ENCODE measurements at regions of chr17 and their contacts with region 1.

Region 1: GRCh38 chr17:40113110-40113906 is 8.5 kb upstream of the MSL1 start:
- DNase-seq: peak; percentile 97

Region 2: DNA sequence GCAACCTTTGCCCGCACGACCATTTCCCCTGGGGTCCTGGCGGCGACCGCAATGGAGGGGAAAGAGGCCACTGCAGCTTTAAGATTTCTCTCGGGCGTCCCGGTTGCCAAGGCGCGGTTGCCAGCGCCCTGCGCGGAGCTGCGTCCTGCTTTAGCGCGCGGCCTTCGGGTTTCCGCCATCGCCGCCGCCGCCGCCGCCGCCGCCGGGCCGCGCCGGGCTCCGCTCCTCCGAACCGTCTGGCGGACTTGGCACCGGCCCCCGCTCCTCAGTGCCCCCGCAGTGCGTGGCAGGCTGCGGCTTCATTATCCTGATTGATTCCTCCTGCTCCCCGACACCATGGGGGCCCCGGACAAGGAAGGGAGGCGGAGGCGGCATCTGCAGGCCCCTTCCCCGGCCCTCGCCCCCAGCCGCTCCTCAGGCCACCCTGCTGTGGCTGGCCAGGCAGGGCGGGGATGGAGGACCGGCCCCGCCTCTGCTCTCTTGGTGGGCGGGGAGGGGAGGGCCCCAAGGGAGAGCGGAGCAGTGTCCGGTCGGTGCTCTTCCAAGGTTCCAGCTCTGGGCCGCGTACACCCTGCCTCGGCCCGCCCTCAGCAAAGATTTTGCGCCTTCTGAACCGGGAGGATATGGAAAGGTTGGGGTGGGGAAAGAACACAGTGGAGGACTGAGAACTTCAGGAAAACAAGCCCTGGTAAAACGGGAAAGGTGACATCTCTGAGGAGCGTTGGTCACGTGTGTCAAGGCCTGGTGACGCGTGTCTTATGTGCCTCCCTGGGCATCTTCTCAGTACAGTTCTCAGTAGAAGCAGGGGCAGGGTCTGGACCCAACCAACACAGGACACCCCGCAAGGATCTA is 539.6 kb before region 1 on chr17:
- intact Hi-C with region 1: no loop called
- DNase-seq: peak; percentile 80

Region 3: GRCh38 chr17:39738931-39739884 is 374.1 kb before region 1 on chr17:
- intact Hi-C with region 1: no loop called
- DNase-seq: no peak

Region 4: GRCh38 chr17:40019140-40019991 is 93.9 kb before region 1 on chr17:
- intact Hi-C with region 1: loop called (anchors 2 kb)
- DNase-seq: no peak

Region 5: GRCh38 chr17:40038882-40039513 is 74.3 kb before region 1 on chr17:
- intact Hi-C with region 1: loop called (anchors 5 kb)
- DNase-seq: no peak

Region 6: DNA sequence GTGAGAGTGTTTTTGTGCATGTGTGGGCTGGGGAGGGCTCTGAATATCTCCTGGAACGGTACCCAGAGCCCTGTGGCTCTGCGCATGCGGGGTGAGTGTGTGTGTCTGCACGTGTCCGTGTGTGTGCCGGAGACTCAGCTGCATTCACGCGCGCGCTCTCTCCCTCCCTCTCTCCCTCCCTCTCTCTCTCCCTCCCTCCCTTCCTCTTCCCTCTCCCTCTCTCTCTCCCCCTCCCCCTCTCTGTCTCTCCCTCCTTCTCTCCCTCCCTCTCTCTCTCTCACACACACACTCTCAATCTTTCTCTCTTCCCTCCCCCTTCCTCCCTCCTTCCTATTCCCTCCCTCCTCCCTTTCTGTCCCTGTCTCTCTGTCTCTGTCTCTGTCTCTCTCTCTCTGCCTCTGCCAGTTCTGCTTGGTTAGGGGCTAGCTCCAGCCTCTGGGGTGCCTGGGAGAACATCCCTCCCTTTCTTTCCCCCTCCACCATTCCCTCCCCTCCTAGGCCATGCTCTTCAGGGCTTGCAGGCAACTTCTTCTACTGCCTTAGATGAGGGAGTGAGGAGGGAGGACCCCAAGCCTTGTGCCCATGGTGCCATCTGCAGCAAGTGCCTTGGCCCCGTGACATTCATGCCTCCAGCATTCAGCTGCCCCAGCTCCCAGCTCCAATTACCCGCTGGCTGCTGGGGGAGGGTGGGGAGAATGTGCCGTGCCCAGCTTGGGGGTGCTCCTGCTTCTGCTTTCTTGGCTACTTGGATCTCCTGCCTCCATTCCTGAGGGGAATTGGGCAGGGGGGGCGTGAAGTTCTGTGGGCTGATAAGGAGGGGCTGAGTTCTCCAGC is 44.2 kb before region 1 on chr17:
- intact Hi-C with region 1: loop called (anchors 2 kb)
- DNase-seq: peak; percentile 95

Region 7: GRCh38 chr17:40098846-40099618 is 14.3 kb before region 1 on chr17:
- intact Hi-C with region 1: loop called (anchors 1 kb)
- DNase-seq: peak; percentile 100

Region 8: GRCh38 chr17:40157973-40158372 is 44.7 kb after region 1 on chr17:
- intact Hi-C with region 1: loop called (anchors 5 kb)
- DNase-seq: no peak

Region 9: GRCh38 chr17:40168262-40168832 is 55.0 kb after region 1 on chr17:
- intact Hi-C with region 1: loop called (anchors 1 kb)
- DNase-seq: no peak

Measured in cardiac septum (tissue), 1 donor.